Activated CD4-positive, alpha-beta memory T cell treated with anti-CD3 and anti-CD28 coated beads for 36 hours (primary cell): ENCODE measurements at regions of chr10 and their contacts with region 1.

Region 1: GRCh38 chr10:109934958-109935706 is 11.8 kb upstream of the XPNPEP1 start:
- DNase-seq: peak; percentile 47
- H3K4me3 Mint-ChIP-seq: peak overlapping the region; percentile 74
- H3K27ac Mint-ChIP-seq: peak overlapping the region; percentile 87
- H3K4me1 Mint-ChIP-seq: peaks cover 66% of the 10 kb centered on the region
- H3K27me3 Mint-ChIP-seq: no peaks in the 10 kb centered on the region

Region 2: GRCh38 chr10:109838592-109839244 is 96.4 kb before region 1 on chr10:
- CTCF ChIA-PET with region 1: no interaction called
- POLR2A ChIA-PET with region 1: no interaction called
- intact Hi-C with region 1: no loop called
- DNase-seq: no peak
- H3K4me3 Mint-ChIP-seq: no peak overlapping the region
- H3K27ac Mint-ChIP-seq: no peak overlapping the region
- H3K4me1 Mint-ChIP-seq: no peaks in the 10 kb centered on the region
- H3K27me3 Mint-ChIP-seq: peaks cover 4% of the 10 kb centered on the region

Region 3: DNA sequence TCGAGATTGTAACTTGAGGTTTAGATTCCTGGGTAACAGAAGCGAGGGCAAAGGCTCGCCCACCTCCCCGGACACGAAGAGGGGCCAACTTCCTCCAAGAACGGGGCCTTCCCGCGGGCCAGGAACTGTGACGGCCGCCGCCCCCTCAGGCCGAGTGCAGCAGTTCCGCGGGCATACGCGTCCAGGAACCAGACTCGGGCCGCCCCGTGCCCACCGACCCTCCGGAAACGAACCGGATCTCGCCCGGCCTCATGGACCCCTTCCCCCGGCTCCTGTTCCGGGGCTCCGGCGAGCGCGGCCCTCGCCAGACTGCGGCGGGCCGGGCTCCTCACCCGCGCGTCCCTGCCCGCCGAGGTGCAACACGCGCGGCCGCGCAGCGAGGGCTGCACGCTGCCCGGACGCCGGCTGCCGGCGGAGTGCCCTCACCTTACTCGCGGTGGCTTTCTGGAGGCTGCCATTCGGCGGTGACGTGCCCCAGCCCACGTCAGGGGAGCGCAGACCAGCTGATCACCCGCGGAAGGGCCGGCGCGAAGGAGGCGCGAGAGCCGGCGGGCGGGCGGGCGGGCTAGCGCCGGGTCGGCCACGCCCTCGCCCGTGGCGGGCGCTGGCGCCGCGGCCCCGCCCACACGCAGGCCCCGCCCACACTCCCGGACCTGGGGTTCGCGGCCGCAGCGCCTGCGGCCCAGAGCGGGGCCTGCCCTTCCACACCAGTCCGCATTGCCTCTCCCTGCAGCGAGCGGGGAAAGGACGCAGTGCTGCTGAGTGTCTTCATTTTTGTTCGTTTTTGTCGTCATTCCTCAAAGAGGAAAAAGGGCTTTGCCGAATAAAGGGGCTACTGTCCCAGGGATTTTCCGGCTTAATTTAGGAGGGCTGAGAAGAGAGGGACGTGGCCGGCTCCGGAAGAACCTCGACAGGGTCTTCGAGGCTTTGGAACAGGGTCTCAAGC is 11.9 kb before region 1 on chr10 and contains the start of gene XPNPEP1:
- CTCF ChIA-PET with region 1: no interaction called
- POLR2A ChIA-PET with region 1: interaction called, 5 read pairs
- intact Hi-C with region 1: loop called (anchors 1 kb)
- DNase-seq: peak; percentile 90
- H3K4me3 Mint-ChIP-seq: peak within 1 kb of the TSS; percentile 90
- H3K27ac Mint-ChIP-seq: peak within 1 kb of the TSS; percentile 93
- H3K4me1 Mint-ChIP-seq: peaks cover 56% of the 10 kb centered on the region
- H3K27me3 Mint-ChIP-seq: no peaks in the 10 kb centered on the region
- total RNA-seq, gene XPNPEP1: 66.4 to 66.6 TPM

Region 4: DNA sequence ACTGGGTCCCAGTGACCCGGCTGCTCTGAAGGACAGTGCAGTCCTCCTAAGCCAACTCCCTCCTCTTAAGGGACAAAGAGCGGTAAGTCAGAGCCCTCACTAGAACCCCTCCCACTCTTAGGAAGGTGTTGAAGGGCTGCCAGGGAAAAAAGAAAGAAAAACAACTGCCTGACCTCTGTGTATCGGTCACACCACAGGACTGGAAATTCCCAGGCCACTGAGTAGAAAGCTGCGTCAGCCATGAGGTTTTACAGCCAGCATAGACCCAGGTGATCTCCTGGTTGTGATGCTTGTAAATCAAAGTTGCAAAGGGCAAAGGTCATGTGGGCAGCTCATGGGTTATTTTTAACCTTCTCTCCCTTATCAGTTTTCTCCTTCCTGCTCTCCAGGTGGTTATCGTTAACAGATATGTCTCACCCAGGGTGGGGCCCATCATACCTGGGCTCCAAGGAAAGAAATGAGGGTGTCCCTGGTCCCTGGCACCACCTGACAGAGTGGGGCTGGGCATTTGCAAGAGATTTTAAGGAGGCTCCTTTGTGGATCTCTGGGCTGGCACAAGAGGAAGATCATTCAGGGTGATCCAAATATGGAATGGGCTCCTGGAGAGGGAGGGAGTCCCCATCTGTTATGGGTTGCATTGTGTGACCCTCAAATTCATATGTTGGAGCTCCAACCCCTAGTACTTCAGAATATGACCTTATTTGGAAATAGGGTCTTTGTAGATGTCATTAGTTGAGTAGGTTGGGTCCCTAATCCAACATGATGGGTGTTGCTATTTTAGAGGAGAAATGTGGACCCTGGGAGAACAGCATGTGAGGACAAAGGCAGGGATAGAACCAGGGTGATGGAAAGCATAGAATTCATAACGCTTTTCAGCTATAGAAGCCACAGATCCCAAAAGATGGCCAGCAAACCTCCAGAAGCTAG is 460.9 kb after region 1 on chr10:
- CTCF ChIA-PET with region 1: no interaction called
- POLR2A ChIA-PET with region 1: no interaction called
- intact Hi-C with region 1: no loop called
- DNase-seq: peak; percentile 86
- H3K4me3 Mint-ChIP-seq: no peak overlapping the region
- H3K27ac Mint-ChIP-seq: peak overlapping the region; percentile 79
- H3K4me1 Mint-ChIP-seq: peaks cover 48% of the 10 kb centered on the region
- H3K27me3 Mint-ChIP-seq: no peaks in the 10 kb centered on the region

Region 5: DNA sequence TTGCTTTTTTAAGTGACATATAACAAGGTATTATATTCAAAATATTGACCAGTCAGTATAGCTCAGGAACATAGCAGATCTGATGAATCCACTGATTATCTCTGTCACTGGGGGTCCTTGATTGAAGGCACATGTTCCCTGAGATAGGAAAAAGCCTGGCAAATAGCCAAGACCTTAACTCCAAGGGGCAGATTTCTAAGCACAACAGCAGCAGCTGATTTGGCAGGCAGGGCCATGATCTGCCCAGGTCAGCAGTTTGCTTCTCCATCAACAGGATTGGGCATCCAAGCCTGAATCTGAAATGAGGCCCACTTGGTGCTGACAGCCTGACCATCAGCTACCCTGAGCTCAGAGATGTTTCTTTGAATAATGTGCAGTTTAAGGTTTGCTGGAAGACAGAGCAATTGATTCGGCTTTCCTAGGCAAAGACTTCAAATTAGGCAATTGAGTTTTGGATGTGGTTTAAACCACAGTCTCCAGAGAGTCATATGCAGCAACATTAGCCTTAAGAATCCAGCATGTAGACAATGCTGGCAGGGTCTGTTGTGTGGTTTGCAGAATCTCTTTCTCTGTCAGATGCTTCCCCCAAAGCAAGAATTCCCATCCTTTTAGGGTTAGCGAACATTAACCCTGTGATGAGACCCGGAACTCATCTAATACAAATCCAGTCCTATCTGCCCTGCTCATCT is 1494.4 kb after region 1 on chr10:
- CTCF ChIA-PET with region 1: no interaction called
- POLR2A ChIA-PET with region 1: no interaction called
- intact Hi-C with region 1: loop called (anchors 10 kb)
- DNase-seq: no peak
- H3K4me3 Mint-ChIP-seq: no peak overlapping the region
- H3K27ac Mint-ChIP-seq: no peak overlapping the region
- H3K4me1 Mint-ChIP-seq: no peaks in the 10 kb centered on the region
- H3K27me3 Mint-ChIP-seq: peaks cover 2% of the 10 kb centered on the region